Psoas muscle (tissue), 8 donors: ENCODE measurements at regions of chr14 and their contacts with region 1.

Region 1: DNA sequence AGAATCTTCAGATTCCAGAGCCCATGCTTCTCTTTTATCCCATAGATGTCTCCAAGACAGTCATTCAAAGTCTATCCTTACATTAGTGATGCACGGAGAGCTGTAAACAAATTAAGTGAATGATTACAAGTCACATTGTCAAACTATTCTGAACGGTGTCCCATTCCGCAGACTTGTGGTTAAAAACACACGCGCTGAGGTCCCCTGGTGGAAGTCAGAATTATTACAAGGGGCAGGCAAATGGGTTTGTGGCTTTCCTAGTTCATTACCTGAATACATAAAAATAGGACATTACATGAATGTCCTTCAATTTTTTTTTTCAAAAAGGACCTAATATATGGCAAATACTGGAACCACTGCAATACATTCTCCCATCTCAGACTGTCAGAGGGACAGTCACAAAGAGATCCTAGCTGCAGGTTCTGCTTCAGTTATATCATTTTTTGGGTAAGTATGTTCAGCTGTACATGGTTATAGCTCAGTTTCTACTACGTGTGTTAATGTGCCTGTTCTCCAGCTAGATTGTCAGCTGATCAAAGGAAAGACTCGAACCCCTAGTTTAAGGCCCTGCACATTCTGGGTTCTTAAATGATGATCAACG is 53.1 kb upstream of the STON2 start:
- DNase-seq: peak; percentile 40 to 69
- ATAC-seq: peak; percentile 39 to 70 (median 65)
- H3K4me3 ChIP-seq: peak overlapping the region; percentile 35
- H3K27ac ChIP-seq: peak overlapping the region; percentile 82
- H3K4me1 ChIP-seq: peaks cover 34% of the 10 kb centered on the region
- H3K27me3 ChIP-seq: no peaks in the 10 kb centered on the region
- CTCF ChIP-seq: peak; percentile 91

Region 2: DNA sequence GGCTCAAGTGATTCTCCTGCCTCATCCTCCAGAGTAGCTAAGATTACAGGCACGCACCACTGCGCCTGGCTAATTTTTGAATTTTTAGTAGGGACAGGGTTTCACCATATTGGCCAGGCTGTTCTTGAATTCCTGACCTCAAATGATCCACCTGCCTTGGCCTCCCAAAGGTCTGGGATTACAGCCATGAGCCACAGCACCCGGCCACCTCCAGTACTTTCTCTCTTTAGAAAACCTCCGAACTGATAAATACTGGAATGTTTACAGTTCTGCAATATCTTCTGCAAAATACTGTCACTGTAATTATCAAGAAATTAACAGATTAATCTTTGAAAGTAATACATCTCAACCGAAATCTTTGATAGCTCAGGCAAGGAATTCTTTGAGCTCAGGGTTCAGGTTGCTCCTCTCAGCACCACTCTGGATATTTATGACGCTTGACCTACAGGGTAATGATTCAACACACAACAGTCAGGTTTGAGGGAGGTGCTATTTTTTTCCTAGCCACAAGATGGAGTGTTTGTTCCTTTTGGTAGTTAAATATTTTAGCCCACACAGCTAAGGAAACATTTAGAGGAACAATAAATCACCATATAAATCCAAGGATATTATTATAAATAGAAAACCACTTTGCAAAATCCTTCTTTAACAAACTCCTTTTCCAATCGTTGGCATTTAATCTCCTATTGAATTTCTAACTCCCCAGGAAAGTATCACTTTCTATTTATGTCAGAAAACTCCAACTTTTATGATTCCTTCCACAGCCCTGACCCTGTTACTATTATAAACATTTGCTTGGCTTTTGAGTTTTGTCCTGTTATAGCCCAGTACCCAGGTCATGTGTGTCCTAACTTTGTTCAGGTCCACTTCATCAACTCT is 183.9 kb before region 1 on chr14:
- intact Hi-C with region 1: loop called (anchors 1 to 2 kb)
- DNase-seq: no peak
- ATAC-seq: peak; percentile 90 to 94 (median 92)
- H3K4me3 ChIP-seq: peak overlapping the region; percentile 31
- H3K27ac ChIP-seq: peak overlapping the region; percentile 67
- H3K4me1 ChIP-seq: peaks cover 42% of the 10 kb centered on the region
- H3K27me3 ChIP-seq: no peaks in the 10 kb centered on the region
- CTCF ChIP-seq: peak; percentile 87

Region 3: GRCh38 chr14:81366214-81366613 is 87.1 kb before region 1 on chr14:
- intact Hi-C with region 1: no loop called
- DNase-seq: no peak
- ATAC-seq: peak; percentile 40 to 87 (median 66)
- H3K4me3 ChIP-seq: no peak overlapping the region
- H3K27ac ChIP-seq: no peak overlapping the region
- H3K4me1 ChIP-seq: peaks cover 13% of the 10 kb centered on the region
- H3K27me3 ChIP-seq: no peaks in the 10 kb centered on the region
- CTCF ChIP-seq: no peak

Region 4: GRCh38 chr14:81412416-81413178 is 40.7 kb before region 1 on chr14:
- intact Hi-C with region 1: loop called in 1 of 2 experiments (anchors 5 kb)
- DNase-seq: no peak
- ATAC-seq: no peak
- H3K4me3 ChIP-seq: no peak overlapping the region
- H3K27ac ChIP-seq: no peak overlapping the region
- H3K4me1 ChIP-seq: peaks cover 3% of the 10 kb centered on the region
- H3K27me3 ChIP-seq: no peaks in the 10 kb centered on the region
- CTCF ChIP-seq: no peak

Region 5: GRCh38 chr14:81423504-81423903 is 29.8 kb before region 1 on chr14:
- intact Hi-C with region 1: no loop called
- DNase-seq: peak; percentile 60 to 79
- ATAC-seq: peak; percentile 33 to 62 (median 48)
- H3K4me3 ChIP-seq: no peak overlapping the region
- H3K27ac ChIP-seq: peak overlapping the region; percentile 44
- H3K4me1 ChIP-seq: peaks cover 15% of the 10 kb centered on the region
- H3K27me3 ChIP-seq: no peaks in the 10 kb centered on the region
- CTCF ChIP-seq: no peak

Region 6: GRCh38 chr14:81555051-81555450 is 101.8 kb after region 1 on chr14:
- intact Hi-C with region 1: no loop called
- DNase-seq: no peak
- ATAC-seq: no peak
- H3K4me3 ChIP-seq: no peak overlapping the region
- H3K27ac ChIP-seq: no peak overlapping the region
- H3K4me1 ChIP-seq: no peaks in the 10 kb centered on the region
- H3K27me3 ChIP-seq: peaks cover 0 to 2% (median 0%) of the 10 kb centered on the region in 3 donors
- CTCF ChIP-seq: no peak

Region 7: GRCh38 chr14:81565441-81566290 is 112.4 kb after region 1 on chr14:
- intact Hi-C with region 1: no loop called
- DNase-seq: no peak
- ATAC-seq: no peak
- H3K4me3 ChIP-seq: no peak overlapping the region
- H3K27ac ChIP-seq: no peak overlapping the region
- H3K4me1 ChIP-seq: no peaks in the 10 kb centered on the region
- H3K27me3 ChIP-seq: no peaks in the 10 kb centered on the region
- CTCF ChIP-seq: peak; percentile 38